ENCODE measurements at regions of chr11 and their contacts with region 1.

Region 1: DNA sequence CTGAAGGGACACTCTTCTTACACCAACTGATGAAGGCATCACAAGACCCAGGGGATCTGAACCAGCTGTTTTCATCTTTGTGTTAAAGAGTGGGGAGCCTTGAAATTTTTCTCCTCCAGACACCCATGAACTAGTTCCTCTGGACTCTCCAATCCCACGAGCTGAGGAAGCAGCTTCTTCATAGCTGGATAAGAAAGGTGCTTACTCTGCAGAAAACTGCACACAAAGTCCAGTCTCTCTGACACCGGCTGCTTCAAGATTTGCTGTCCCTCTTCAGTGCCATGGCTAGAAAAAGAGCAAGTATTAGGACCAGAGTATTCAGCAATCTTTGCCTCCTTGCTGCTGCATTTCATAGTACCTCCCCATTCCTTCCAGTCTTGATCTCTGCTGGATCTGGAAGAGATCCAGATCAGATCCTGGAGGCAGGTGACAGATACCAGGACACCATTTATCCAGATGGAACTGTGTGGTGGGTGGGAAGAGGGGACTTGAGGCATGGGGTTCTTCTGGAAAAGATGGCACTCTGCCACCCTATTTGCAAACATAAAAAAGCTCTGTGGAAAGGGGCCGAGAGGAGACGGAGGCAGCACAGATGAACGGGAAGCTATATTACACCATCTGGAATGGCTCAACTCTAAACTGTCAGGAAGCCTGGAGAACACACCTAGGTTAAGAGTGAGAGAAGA is 25.5 kb downstream of the IL18BP start:
- H3K4me3 ChIP-seq: no peak overlapping the region
- H3K27ac ChIP-seq: no peak overlapping the region
- H3K4me1 ChIP-seq: no peaks in the 10 kb centered on the region
- CTCF ChIP-seq: no peak

Region 2: GRCh38 chr11:72040726-72041441 is 16.7 kb after region 1 on chr11:
- CTCF ChIA-PET with region 1: interaction called, 14 read pairs
- POLR2A ChIA-PET with region 1: interaction called, 3 read pairs
- H3K4me3 ChIP-seq: peak overlapping the region; percentile 59
- H3K27ac ChIP-seq: peak overlapping the region; percentile 84
- H3K4me1 ChIP-seq: peaks cover 22% of the 10 kb centered on the region
- CTCF ChIP-seq: no peak

Region 3: GRCh38 chr11:72058416-72059034 is 34.3 kb after region 1 on chr11:
- CTCF ChIA-PET with region 1: interaction called, 10 read pairs
- POLR2A ChIA-PET with region 1: no interaction called
- H3K4me3 ChIP-seq: no peak overlapping the region
- H3K27ac ChIP-seq: no peak overlapping the region
- H3K4me1 ChIP-seq: no peaks in the 10 kb centered on the region
- CTCF ChIP-seq: no peak

Region 4: DNA sequence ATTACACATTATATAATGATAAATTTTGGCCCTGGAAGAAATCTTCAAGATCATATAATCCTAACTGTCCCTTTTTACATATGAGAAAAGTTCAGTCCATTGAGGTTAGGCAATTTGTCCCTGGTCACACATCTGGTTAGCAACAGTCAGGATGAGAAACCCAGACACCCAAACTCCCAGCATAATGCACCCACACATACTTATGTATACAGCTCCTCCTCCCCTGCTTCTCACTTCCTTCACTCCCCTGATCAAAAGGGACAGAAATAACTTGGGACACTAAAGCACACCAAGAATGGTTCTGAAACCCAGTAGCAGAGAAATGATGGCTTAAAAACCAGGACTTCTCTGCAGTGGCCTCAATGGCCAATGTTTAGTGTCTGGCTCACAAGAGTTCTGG is 45.0 kb after region 1 on chr11:
- CTCF ChIA-PET with region 1: interaction called, 17 read pairs
- POLR2A ChIA-PET with region 1: no interaction called
- H3K4me3 ChIP-seq: no peak overlapping the region
- H3K27ac ChIP-seq: no peak overlapping the region
- H3K4me1 ChIP-seq: peaks cover 2% of the 10 kb centered on the region; the same call in 1 of the 2 replicates
- CTCF ChIP-seq: no peak

Region 5: DNA sequence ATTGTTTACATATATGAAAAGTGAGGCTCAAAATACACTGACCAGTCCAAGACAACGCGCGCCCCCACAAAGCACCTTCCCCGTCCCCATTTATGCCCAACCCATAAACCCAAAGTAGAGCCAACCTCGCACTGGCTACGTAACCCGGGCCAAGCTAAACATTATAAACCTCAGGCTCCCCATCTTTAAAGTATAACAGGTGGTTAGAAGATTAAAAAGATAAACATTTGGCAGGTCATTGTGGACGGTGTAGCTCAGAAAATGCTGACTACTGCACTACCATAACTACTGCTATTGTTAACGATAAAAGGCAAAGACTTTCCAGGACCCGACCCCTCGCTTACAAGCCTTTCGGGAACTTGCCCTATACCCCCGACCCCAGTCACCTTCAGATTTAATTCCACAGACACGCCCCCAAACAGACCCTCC is 55.6 kb after region 1 on chr11:
- CTCF ChIA-PET with region 1: interaction called, 60 read pairs
- POLR2A ChIA-PET with region 1: no interaction called
- H3K4me3 ChIP-seq: peak overlapping the region; percentile 77
- H3K27ac ChIP-seq: peak overlapping the region; percentile 57
- H3K4me1 ChIP-seq: no peaks in the 10 kb centered on the region
- CTCF ChIP-seq: no peak

Region 6: DNA sequence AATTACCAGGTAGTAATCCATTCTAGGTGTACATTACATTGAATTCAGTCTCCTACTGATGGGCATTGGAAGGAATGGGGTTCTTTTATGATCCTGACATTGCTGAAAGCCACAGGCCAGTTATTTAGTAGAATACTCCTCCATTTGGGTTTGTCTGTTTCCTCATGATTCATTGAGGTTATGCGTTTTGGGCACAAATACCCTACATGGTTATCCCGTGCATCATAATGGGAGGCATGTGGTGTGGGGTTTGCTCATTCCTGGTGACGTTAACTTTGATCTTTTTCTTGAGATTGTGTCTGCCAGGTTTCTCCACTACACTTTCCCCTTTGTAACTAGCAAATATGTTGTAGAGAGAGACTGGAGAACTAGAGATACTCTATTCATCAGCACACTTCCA is 116.9 kb after region 1 on chr11:
- CTCF ChIA-PET with region 1: interaction called, 35 read pairs
- POLR2A ChIA-PET with region 1: interaction called, 10 read pairs
- H3K4me3 ChIP-seq: no peak overlapping the region
- H3K27ac ChIP-seq: no peak overlapping the region
- H3K4me1 ChIP-seq: no peaks in the 10 kb centered on the region
- CTCF ChIP-seq: no peak

Measured in HEK293 (cell line).